ENCODE measurements at regions of chr1 and their contacts with region 1.

Region 1: GRCh38 chr1:16440470-16441281 is at the start of gene NECAP2:
- DNase-seq: peak; percentile 93
- H3K4me3 ChIP-seq: peak within 1 kb of the TSS; percentile 59 to 95 (median 92)
- H3K27ac ChIP-seq: peak within 1 kb of the TSS; percentile 29
- H3K4me1 ChIP-seq: peaks cover 12% of the 10 kb centered on the region
- H3K27me3 ChIP-seq: no peaks in the 10 kb centered on the region
- CTCF ChIP-seq: peak; percentile 95 to 97
- POLR2A ChIP-seq: peak; percentile 96
- total RNA-seq, gene NECAP2: 101 and 107 TPM in 2 replicates

Region 2: DNA sequence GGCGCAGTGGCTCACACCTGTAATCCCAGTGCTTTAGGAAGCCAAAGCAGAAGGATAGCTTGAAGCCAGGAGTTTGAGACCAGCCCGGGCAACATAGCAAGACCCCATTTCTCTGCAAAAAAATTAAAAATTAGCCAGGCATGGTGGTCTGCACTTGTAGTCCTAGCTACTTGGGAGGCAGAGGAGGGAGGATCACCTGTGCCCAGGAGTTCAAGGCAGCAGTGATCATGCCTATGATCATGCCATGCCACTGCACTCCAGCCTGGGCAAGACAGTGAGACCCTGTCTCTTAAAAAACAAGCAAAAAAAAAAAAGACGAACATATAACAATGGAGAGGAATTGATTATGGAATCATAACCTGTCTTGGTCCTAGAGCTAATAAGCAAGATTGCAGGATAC is 133.5 kb before region 1 on chr1:
- CTCF ChIA-PET with region 1: no interaction called
- POLR2A ChIA-PET with region 1: no interaction called
- dilution Hi-C with region 1: no loop called
- intact Hi-C with region 1: no loop called
- DNase-seq: no peak
- H3K4me3 ChIP-seq: no peak overlapping the region
- H3K27ac ChIP-seq: no peak overlapping the region
- H3K4me1 ChIP-seq: no peaks in the 10 kb centered on the region
- H3K27me3 ChIP-seq: no peaks in the 10 kb centered on the region
- CTCF ChIP-seq: no peak
- POLR2A ChIP-seq: no peak

Region 3: DNA sequence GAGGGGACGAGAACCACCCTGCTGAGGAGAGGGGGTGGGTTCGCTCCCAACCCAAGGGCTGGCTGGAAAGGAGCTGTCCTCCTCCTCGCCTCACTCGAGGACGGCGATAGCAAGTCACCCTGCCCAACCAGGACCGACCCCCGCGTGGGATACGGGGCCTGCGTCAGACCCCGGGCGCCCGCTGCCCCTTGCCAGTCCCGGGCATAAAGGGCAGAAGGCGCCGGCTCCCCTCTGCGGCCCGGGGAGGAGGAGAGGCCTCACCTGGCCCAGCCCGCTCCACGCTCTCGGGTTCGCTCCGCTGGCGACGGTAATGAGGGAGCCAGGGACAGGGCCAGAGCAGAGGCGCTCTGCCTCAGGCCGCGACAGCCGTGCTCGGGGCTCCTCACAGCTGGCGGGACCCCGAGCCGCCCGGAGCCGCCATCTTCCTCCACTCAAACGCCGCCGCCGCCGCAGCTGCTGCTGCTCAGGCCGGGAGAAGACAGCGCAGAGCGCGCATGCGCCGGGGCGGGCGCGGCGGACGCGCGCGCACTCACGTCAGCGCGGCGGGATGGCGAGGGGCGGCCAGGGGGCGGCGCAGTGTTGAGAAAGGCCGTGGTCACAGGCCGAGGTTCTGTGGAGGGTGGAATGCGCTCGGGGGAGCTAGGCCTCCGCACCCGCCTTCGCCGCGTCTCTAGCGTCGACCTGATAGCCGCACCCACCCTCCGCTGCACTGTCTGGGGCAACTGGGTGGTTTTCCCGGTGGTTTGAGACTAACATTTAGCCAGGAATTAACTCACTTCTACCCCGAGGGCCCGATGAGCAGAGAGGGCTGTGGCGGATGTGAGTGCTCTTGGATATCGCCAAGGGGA is 88.5 kb before region 1 on chr1 and contains the start of gene FBXO42:
- CTCF ChIA-PET with region 1: interaction called, 3 read pairs
- POLR2A ChIA-PET with region 1: no interaction called
- dilution Hi-C with region 1: no loop called
- intact Hi-C with region 1: loop called (anchors 1 kb)
- DNase-seq: peak; percentile 96
- H3K4me3 ChIP-seq: peak within 1 kb of the TSS; percentile 66 to 88 (median 85)
- H3K27ac ChIP-seq: peak within 1 kb of the TSS; percentile 86
- H3K4me1 ChIP-seq: peaks cover 26% of the 10 kb centered on the region
- H3K27me3 ChIP-seq: no peaks in the 10 kb centered on the region
- CTCF ChIP-seq: peak; percentile 36 to 50
- POLR2A ChIP-seq: peak; percentile 80
- total RNA-seq, gene FBXO42: 16.3 and 17.3 TPM in 2 replicates

Region 4: GRCh38 chr1:16375521-16376359 is 64.9 kb before region 1 on chr1:
- CTCF ChIA-PET with region 1: interaction called, 18 read pairs
- POLR2A ChIA-PET with region 1: no interaction called
- dilution Hi-C with region 1: no loop called
- intact Hi-C with region 1: loop called (anchors 1 kb)
- DNase-seq: peak; percentile 90
- H3K4me3 ChIP-seq: peak overlapping the region in 1 of 3 experiments; percentile 2
- H3K27ac ChIP-seq: peak overlapping the region; percentile 85
- H3K4me1 ChIP-seq: peaks cover 62% of the 10 kb centered on the region
- H3K27me3 ChIP-seq: no peaks in the 10 kb centered on the region
- CTCF ChIP-seq: no peak
- POLR2A ChIP-seq: peak; percentile 58

Region 5: GRCh38 chr1:16498573-16499413 is 58.1 kb after region 1 on chr1:
- CTCF ChIA-PET with region 1: no interaction called
- POLR2A ChIA-PET with region 1: no interaction called
- dilution Hi-C with region 1: no loop called
- intact Hi-C with region 1: loop called (anchors 1 kb)
- DNase-seq: peak; percentile 90
- H3K4me3 ChIP-seq: peak overlapping the region; percentile 43 to 91 (median 67)
- H3K27ac ChIP-seq: no peak overlapping the region
- H3K4me1 ChIP-seq: peaks cover 3% of the 10 kb centered on the region
- H3K27me3 ChIP-seq: no peaks in the 10 kb centered on the region
- CTCF ChIP-seq: no peak
- POLR2A ChIP-seq: peak; percentile 73

Region 6: GRCh38 chr1:16613185-16614147 is 172.8 kb after region 1 on chr1 and contains the start of gene NBPF1:
- CTCF ChIA-PET with region 1: interaction called, 3 read pairs
- POLR2A ChIA-PET with region 1: no interaction called
- dilution Hi-C with region 1: no loop called
- intact Hi-C with region 1: loop called (anchors 2 kb)
- DNase-seq: peak; percentile 100
- H3K4me3 ChIP-seq: peak within 1 kb of the TSS; percentile 48 to 66 (median 53)
- H3K27ac ChIP-seq: no peak within 1 kb of the TSS
- H3K4me1 ChIP-seq: peaks cover 12% of the 10 kb centered on the region
- H3K27me3 ChIP-seq: no peaks in the 10 kb centered on the region
- CTCF ChIP-seq: peak in 1 of 2 donors; percentile 1
- POLR2A ChIP-seq: peak; percentile 99
- total RNA-seq, gene NBPF1: 33.5 and 58.4 TPM in 2 replicates

Measured in endothelial cell of umbilical vein (primary cell).